ENCODE measurements at regions of chr2 and their contacts with region 1.

Region 1: DNA sequence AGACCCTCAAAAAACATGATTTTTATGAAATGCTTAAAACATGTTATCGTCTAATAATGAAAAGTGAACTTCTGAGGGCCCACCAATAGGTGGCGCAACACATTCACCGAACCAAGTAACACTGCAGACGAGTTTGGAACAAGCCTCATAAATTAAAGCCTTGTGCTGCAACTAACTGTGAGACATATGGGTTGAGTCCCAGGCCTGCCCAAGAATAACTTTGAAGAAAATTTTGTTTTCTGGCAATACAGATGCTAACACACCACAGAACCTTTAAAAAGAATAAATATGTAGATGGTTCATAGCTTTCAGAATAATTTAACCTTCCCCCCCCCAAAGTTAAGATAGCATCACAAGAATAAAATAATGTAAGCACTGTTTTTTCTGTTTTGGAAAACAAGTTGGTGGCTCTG is 285.8 kb downstream of the RNF144A start:
- DNase-seq: peak in 2 of 5 donors; percentile 19 to 33
- ATAC-seq: peak in 2 of 4 donors; percentile 45 to 53
- H3K4me3 ChIP-seq: no peak overlapping the region
- H3K27ac ChIP-seq: no peak overlapping the region
- H3K4me1 ChIP-seq: no peaks in the 10 kb centered on the region
- H3K27me3 ChIP-seq: no peaks in the 10 kb centered on the region
- CTCF ChIP-seq: peak; percentile 75 to 96 (median 86)
- POLR2A ChIP-seq: no peak

Region 2: GRCh38 chr2:7146151-7146550 is 56.9 kb before region 1 on chr2:
- intact Hi-C with region 1: no loop called
- DNase-seq: no peak
- ATAC-seq: no peak
- H3K4me3 ChIP-seq: no peak overlapping the region
- H3K27ac ChIP-seq: no peak overlapping the region
- H3K4me1 ChIP-seq: no peaks in the 10 kb centered on the region
- H3K27me3 ChIP-seq: no peaks in the 10 kb centered on the region
- CTCF ChIP-seq: no peak
- POLR2A ChIP-seq: no peak

Region 3: GRCh38 chr2:7356909-7357584 is 154.0 kb after region 1 on chr2:
- intact Hi-C with region 1: no loop called
- DNase-seq: no peak
- ATAC-seq: peak in 1 of 4 donors; percentile 31
- H3K4me3 ChIP-seq: no peak overlapping the region
- H3K27ac ChIP-seq: no peak overlapping the region
- H3K4me1 ChIP-seq: no peaks in the 10 kb centered on the region
- H3K27me3 ChIP-seq: peaks cover 0 to 3% (median 0%) of the 10 kb centered on the region in 9 donors
- CTCF ChIP-seq: no peak
- POLR2A ChIP-seq: no peak

Region 4: GRCh38 chr2:8761529-8762164 is 1558.6 kb after region 1 on chr2:
- intact Hi-C with region 1: loop called in 2 of 10 experiments (anchors 5 to 10 kb)
- DNase-seq: no peak
- ATAC-seq: no peak
- H3K4me3 ChIP-seq: no peak overlapping the region
- H3K27ac ChIP-seq: no peak overlapping the region
- H3K4me1 ChIP-seq: peaks cover 0 to 5% (median 0%) of the 10 kb centered on the region in 12 donors
- H3K27me3 ChIP-seq: no peaks in the 10 kb centered on the region
- CTCF ChIP-seq: peak; percentile 11 to 65 (median 48)
- POLR2A ChIP-seq: no peak

Measured in heart left ventricle (tissue), 16 donors.